Calu3 (cell line): ENCODE measurements at regions of chr18 and their contacts with region 1.

Region 1: GRCh38 chr18:13137670-13138419 is 80.7 kb upstream of the LDLRAD4 start:
- DNase-seq: peak; percentile 72
- H3K4me3 Mint-ChIP-seq: peak overlapping the region; percentile 89
- H3K27ac Mint-ChIP-seq: peak overlapping the region; percentile 69
- H3K4me1 Mint-ChIP-seq: peaks cover 24% of the 10 kb centered on the region
- H3K27me3 Mint-ChIP-seq: peaks cover 8% of the 10 kb centered on the region
- CTCF ChIP-seq: no peak

Region 2: DNA sequence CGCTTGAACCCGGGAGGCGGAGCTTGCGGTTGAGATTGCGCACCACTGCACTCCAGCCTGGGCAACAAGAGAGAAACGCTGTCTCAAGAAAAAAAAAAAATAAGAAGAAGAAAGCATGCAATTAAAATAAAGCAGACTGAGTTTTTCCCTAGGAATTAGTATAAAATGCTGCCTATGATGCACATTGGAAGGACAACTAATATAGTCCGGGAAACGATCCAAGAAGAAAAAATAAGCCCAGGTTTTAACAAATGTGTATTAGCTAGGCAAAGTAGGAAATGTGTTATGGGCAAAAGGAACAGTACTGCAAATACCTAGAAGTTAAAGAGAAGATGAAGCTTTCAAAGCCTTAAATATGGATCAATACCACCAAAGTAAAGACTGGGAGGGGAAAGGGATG is 544.0 kb before region 1 on chr18:
- CTCF ChIA-PET with region 1: no interaction called
- intact Hi-C with region 1: no loop called
- DNase-seq: no peak
- H3K4me3 Mint-ChIP-seq: no peak overlapping the region
- H3K27ac Mint-ChIP-seq: no peak overlapping the region
- H3K4me1 Mint-ChIP-seq: peaks cover 62% of the 10 kb centered on the region
- H3K27me3 Mint-ChIP-seq: no peaks in the 10 kb centered on the region
- CTCF ChIP-seq: no peak

Region 3: GRCh38 chr18:13159579-13159978 is 21.7 kb after region 1 on chr18:
- CTCF ChIA-PET with region 1: interaction called, 10 read pairs
- intact Hi-C with region 1: loop called (anchors 1 kb)
- DNase-seq: peak; percentile 58
- H3K4me3 Mint-ChIP-seq: no peak overlapping the region
- H3K27ac Mint-ChIP-seq: no peak overlapping the region
- H3K4me1 Mint-ChIP-seq: no peaks in the 10 kb centered on the region
- H3K27me3 Mint-ChIP-seq: peaks cover 49% of the 10 kb centered on the region
- CTCF ChIP-seq: peak; percentile 74

Region 4: DNA sequence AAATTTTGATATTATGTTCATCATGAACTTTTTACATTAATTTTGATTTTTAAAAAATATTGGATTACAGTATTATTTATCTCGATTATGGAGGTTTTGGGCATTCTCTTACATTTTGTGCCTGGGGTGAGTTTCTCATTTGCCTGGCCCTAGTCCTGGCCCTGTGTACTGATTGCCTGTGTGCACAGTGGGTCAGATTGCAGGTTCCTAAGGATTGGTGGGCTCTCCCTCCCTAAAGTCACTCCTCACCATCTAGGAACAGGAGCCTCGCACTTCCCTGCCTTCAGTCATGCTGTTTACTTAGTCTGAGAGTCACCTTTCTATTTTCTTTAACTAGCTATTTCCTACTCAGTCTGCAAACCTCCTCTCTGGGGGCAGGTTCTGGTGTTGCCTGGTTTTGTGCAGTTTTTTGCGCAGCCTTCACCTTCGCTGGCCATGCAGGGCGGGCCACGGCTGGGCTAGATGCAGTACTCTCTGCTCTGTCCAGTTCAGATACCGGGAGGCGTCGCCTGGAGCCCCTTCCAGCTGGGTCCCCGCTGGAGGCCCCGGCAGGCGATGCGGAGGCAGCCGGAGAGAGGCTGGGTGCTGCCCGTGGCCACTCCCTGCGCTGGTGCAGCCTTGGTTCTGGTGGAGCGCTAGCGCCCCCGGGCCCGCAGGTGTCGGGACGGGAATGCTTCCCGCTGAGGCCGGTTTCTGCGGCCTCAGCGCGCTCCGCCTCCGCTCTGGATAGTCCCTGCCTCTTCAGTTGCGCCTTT is 662.8 kb after region 1 on chr18:
- CTCF ChIA-PET with region 1: no interaction called
- intact Hi-C with region 1: loop called (anchors 5 kb)
- DNase-seq: peak; percentile 90
- H3K4me3 Mint-ChIP-seq: peak overlapping the region; percentile 71
- H3K27ac Mint-ChIP-seq: peak overlapping the region; percentile 50
- H3K4me1 Mint-ChIP-seq: peaks cover 40% of the 10 kb centered on the region
- H3K27me3 Mint-ChIP-seq: no peaks in the 10 kb centered on the region
- CTCF ChIP-seq: peak; percentile 47